Activated CD8-positive, alpha-beta memory T cell treated with anti-CD3 and anti-CD28 coated beads, Interleukin-2, amount 10 ng/mL, durations not matched to agents 7 days and 5 days (primary cell): ENCODE measurements at regions of chr6 and their contacts with region 1.

Region 1: GRCh38 chr6:52399511-52400312 is 20.4 kb upstream of the EFHC1 start:
- DNase-seq: no peak
- ATAC-seq: peak; percentile 39
- H3K4me3 Mint-ChIP-seq: no peak overlapping the region
- H3K27ac Mint-ChIP-seq: peak overlapping the region; percentile 39
- H3K4me1 Mint-ChIP-seq: peaks cover 51% of the 10 kb centered on the region
- H3K27me3 Mint-ChIP-seq: peaks cover 4% of the 10 kb centered on the region

Region 2: DNA sequence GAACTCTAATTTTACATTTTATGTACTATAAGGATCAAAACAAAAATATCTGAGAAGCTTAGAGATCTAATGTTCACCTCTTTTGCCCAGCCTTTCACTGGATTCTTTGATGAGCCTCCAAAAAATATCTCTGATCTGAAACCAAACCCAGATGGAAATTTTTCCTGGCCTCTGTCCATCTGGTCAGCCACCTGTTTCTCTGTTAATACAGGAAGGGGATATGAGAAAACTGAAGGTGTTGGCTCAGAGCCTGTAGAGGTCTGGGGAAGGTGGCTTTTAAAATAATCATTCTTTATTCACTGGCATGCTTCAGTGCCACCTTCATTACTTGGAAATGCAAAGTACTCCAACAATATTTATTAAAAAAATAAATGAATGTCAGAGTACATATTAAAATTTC is 106.6 kb before region 1 on chr6:
- CTCF ChIA-PET with region 1: interaction called, 11 read pairs
- DNase-seq: no peak
- ATAC-seq: no peak
- H3K4me3 Mint-ChIP-seq: no peak overlapping the region
- H3K27ac Mint-ChIP-seq: no peak overlapping the region
- H3K4me1 Mint-ChIP-seq: peaks cover 22% of the 10 kb centered on the region
- H3K27me3 Mint-ChIP-seq: no peaks in the 10 kb centered on the region

Region 3: DNA sequence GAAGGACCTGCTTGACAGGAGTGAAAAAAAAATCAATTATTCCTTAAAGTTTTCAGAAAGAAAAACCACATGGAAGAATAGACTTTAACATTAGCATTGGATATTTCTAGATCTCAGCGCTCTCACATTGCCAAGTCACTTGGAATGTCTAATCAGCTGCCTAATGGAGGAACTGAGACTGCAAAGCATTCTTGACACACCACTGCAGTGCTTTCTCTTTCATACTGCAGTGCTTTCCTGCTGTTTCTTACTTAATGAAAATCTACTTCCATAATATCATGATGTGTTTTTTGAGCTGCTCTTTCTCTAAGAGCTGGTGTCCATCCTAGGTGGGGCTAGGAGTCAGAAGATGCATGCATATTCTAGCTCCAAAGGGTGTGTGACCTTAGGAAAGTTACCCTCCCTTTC is 94.7 kb before region 1 on chr6:
- CTCF ChIA-PET with region 1: interaction called, 14 read pairs
- DNase-seq: no peak
- ATAC-seq: peak; percentile 51
- H3K4me3 Mint-ChIP-seq: peak overlapping the region; percentile 37
- H3K27ac Mint-ChIP-seq: peak overlapping the region; percentile 79
- H3K4me1 Mint-ChIP-seq: peaks cover 53% of the 10 kb centered on the region
- H3K27me3 Mint-ChIP-seq: no peaks in the 10 kb centered on the region